Activated naive CD4-positive, alpha-beta T cell treated with anti-CD3 and anti-CD28 coated beads for 36 hours (primary cell): ENCODE measurements at regions of chr10 and their contacts with region 1.

Region 1: DNA sequence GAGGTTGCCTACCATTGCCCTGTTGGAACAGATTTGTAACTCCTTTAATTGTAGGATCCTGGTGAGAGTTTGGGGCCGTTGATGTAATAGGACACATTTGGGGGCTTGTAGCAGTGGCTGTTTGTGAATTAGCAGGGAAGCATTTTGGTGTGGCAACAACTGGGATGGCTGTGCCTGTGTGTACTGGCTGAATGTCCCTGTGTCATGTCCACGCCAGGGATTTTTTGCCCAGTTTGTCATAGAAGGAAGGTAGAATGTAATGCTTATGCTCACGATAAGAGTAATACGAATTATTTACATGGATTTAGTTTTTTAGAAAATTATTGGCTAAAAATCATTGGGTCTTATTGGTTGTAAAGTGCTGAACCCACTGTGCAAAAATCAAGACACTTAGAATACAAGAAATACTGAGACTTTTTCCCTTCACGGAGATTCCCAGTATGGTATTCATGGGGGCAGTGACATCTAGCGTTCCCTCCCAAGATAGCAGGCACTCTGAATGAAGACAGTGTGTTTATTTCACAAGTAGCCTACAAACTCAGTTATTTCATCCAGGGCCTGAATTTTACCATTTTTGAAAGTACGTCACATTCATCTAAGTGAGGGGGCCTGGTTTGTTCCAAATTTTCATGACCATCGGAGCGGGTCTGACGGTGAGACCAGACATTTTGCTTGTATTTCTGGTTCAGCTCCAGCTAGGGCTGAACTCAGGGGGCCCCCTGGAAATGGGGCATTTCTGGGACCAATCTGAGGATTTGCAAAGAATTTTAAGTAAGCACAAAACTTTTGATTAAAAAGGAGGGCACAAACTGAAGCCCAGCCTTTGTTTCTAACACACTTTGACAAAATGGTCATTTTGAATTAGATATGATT is 74.7 kb downstream of the CACNB2 start:
- DNase-seq: peak; percentile 48
- H3K4me3 Mint-ChIP-seq: no peak overlapping the region
- H3K27ac Mint-ChIP-seq: no peak overlapping the region
- H3K4me1 Mint-ChIP-seq: no peaks in the 10 kb centered on the region
- H3K27me3 Mint-ChIP-seq: peaks cover 2% of the 10 kb centered on the region

Region 2: GRCh38 chr10:17737027-17737965 is 477.6 kb before region 1 on chr10:
- CTCF ChIA-PET with region 1: interaction called, 4 read pairs
- intact Hi-C with region 1: loop called (anchors 5 kb)
- DNase-seq: no peak
- H3K4me3 Mint-ChIP-seq: no peak overlapping the region
- H3K27ac Mint-ChIP-seq: no peak overlapping the region
- H3K4me1 Mint-ChIP-seq: peaks cover 2% of the 10 kb centered on the region
- H3K27me3 Mint-ChIP-seq: no peaks in the 10 kb centered on the region

Region 3: DNA sequence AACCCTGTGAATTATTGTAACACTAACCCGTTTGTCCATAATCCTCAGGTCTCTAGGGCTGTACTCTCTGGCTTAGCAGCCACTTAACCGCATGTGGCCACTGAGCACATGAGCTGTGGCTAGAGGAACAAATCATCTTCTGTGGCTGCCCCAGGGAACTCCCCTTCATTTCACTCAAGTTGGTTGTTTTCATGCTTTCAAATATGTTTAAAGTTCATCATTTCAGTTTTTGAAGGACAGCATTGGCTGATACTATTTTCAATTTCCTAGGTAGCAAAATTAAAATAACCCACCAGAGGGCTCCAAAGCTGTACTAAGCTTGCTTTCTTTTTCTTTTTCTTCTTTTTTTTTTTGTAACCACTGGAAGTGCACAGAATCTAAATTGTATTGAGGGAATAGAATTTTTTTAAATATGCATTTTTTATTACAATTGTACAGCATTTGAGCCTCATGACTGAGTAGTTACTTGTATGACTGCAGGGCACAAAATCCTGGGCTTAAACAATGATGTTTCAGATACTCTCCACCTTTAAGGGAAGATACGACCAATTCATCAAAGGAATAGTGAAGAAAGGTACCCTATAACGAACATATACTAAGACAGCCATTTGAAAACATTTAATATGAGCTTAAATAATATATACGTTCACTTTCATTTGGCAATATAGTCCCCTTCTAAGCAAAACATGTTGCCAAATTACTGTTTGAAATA is 367.2 kb before region 1 on chr10:
- CTCF ChIA-PET with region 1: no interaction called
- intact Hi-C with region 1: loop called (anchors 2 kb)
- DNase-seq: no peak
- H3K4me3 Mint-ChIP-seq: no peak overlapping the region
- H3K27ac Mint-ChIP-seq: no peak overlapping the region
- H3K4me1 Mint-ChIP-seq: no peaks in the 10 kb centered on the region
- H3K27me3 Mint-ChIP-seq: peaks cover 6% of the 10 kb centered on the region

Region 4: DNA sequence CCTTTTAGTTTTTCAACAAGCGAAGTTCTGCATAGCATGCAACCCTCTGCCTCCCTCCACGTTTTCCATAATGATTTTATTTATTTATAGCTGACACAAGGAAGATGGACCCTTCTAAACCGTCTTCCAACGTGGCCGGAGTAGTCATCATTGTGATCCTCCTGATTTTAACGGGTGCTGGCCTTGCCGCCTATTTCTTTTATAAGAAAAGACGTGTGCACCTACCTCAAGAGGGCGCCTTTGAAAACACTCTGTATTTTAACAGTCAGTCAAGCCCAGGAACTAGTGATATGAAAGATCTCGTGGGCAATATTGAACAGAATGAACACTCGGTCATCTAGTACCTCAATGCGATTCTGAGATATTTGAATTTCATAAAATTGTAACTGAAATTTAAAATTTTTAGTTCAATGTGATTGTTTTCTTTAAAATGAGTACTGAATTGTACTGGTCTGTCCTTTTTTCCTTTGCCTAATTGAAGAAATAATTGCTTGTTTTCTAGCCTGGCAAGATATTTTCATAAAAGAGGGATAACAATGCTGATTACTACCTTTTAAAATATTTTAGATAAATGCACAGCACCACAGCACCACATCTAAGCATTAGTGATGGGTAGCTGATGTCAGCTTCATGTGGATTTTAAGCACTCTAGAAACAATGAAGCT is 304.7 kb before region 1 on chr10:
- CTCF ChIA-PET with region 1: no interaction called
- intact Hi-C with region 1: loop called (anchors 1 kb)
- DNase-seq: peak; percentile 20
- H3K4me3 Mint-ChIP-seq: no peak overlapping the region
- H3K27ac Mint-ChIP-seq: no peak overlapping the region
- H3K4me1 Mint-ChIP-seq: no peaks in the 10 kb centered on the region
- H3K27me3 Mint-ChIP-seq: peaks cover 16% of the 10 kb centered on the region